ENCODE measurements at regions of chr2 and their contacts with region 1.

Region 1: GRCh38 chr2:61910603-61911002 is 5.1 kb downstream of the COMMD1 start:
- DNase-seq: peak in 1 of 2 experiments; percentile 42
- H3K4me3 ChIP-seq: no peak overlapping the region
- H3K4me3 Mint-ChIP-seq: no peak overlapping the region
- H3K27ac Mint-ChIP-seq: no peak overlapping the region
- H3K4me1 ChIP-seq: no peaks in the 10 kb centered on the region
- H3K4me1 Mint-ChIP-seq: peaks cover 8% of the 10 kb centered on the region
- H3K27me3 ChIP-seq: no peaks in the 10 kb centered on the region
- H3K27me3 Mint-ChIP-seq: no peaks in the 10 kb centered on the region
- CTCF ChIP-seq: peak; percentile 18 to 27

Region 2: GRCh38 chr2:61841286-61841685 is 69.3 kb before region 1 on chr2:
- CTCF ChIA-PET with region 1: no interaction called
- POLR2A ChIA-PET with region 1: no interaction called
- intact Hi-C with region 1: no loop called
- DNase-seq: no peak
- H3K4me3 ChIP-seq: no peak overlapping the region
- H3K4me3 Mint-ChIP-seq: no peak overlapping the region
- H3K27ac Mint-ChIP-seq: no peak overlapping the region
- H3K4me1 ChIP-seq: no peaks in the 10 kb centered on the region
- H3K4me1 Mint-ChIP-seq: no peaks in the 10 kb centered on the region
- H3K27me3 ChIP-seq: no peaks in the 10 kb centered on the region
- H3K27me3 Mint-ChIP-seq: no peaks in the 10 kb centered on the region
- CTCF ChIP-seq: no peak

Region 3: DNA sequence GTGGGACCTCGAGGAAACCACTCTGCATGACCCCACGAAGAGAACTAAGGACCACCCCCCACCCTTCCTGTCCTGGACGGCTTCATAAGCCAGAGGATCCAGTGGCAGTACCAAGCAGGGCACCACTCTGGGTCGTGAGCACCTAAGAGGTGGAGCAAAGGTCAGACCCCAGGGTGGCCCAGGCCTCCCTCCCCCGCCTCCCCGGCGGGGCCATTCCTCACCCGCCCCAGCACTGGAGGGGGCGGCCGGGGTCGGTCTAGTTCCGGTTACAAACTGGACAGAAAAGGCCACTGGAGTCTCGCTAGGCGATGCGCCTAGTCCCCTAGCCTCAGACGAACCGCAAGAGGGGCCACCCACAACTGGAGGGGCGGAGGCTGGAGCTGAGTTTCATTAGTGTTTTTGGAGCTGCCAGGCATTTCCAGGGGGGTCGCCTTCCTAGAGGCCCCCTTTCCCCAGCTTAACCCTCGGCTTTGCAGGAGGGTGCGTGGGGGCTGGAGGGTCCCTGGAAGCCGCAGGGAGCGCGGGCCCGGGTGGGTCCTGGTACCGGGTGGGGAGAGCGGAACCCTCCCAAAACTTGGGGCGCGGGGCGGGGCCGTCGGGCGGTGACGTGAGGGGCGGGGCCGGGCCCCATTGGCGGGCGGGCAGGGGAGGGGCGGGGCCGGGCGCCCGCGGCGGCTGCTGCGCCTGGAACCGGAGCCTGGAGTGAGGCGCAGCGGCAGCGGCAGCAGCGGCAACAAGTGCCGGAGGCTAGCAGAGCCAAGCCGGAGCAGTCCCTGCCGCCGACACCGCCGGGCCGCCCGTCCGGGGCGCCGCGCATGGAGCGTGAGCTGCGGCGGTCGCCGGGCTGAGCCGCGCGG is 285.0 kb after region 1 on chr2 and contains the start of gene B3GNT2:
- CTCF ChIA-PET with region 1: no interaction called
- POLR2A ChIA-PET with region 1: no interaction called
- intact Hi-C with region 1: loop called (anchors 5 kb)
- DNase-seq: peak; percentile 79 to 85
- H3K4me3 ChIP-seq: peak within 1 kb of the TSS; percentile 95
- H3K4me3 Mint-ChIP-seq: peak within 1 kb of the TSS; percentile 79
- H3K27ac Mint-ChIP-seq: peak within 1 kb of the TSS; percentile 36
- H3K4me1 ChIP-seq: peaks cover 23% of the 10 kb centered on the region
- H3K4me1 Mint-ChIP-seq: peaks cover 10% of the 10 kb centered on the region
- H3K27me3 ChIP-seq: no peaks in the 10 kb centered on the region
- H3K27me3 Mint-ChIP-seq: no peaks in the 10 kb centered on the region
- CTCF ChIP-seq: no peak
- total RNA-seq, gene B3GNT2: 47.4 and 50.5 TPM in 2 replicates

Measured in Caco-2 (cell line).